ENCODE measurements at regions of chr11 and their contacts with region 1.

Region 1: DNA sequence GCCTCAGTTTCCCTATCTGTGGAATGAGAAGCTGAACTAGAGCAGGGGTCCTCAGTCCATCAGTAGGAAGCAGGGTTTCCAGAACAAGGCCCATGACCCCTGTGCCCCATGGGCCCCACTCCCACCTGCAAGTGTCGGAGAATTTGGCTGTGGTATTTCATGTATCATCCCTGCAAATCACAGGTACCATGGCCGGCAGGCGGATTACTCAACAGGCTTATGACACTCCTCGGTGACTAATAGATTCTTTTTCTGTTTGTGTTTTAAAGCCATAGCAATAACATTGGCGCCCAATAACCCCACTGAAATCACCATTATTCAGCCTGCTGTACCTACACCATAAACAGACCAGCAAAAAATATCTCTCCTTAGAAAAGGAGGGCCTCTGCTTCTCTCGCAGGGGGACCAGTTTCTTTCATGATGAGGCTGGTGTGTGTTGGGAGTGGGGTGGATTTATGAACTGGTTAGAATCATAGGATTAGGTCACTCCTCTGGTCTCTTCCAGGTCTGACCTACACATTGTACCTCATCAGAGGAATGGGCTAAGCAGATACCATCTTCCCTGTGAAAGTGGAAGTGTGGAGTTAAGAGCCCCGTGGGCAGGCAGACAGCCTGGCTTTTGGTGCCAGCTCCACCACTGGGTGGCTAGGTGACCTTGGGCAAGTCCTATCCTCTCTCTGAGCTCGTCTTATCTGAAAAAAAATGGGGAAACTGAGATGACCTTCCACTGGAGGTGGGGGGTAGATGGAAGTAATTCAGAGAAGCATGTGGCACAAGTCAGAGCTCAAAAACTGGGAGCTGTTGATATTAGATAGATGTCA is 60.2 kb upstream of the WNT11 start:
- DNase-seq: peak in 1 of 2 experiments; percentile 49
- H3K4me3 ChIP-seq: no peak overlapping the region
- H3K4me3 Mint-ChIP-seq: no peak overlapping the region
- H3K27ac Mint-ChIP-seq: peak overlapping the region; percentile 11
- H3K4me1 ChIP-seq: peaks cover 10% of the 10 kb centered on the region
- H3K4me1 Mint-ChIP-seq: no peaks in the 10 kb centered on the region
- H3K27me3 ChIP-seq: no peaks in the 10 kb centered on the region
- H3K27me3 Mint-ChIP-seq: no peaks in the 10 kb centered on the region
- CTCF ChIP-seq: no peak

Region 2: DNA sequence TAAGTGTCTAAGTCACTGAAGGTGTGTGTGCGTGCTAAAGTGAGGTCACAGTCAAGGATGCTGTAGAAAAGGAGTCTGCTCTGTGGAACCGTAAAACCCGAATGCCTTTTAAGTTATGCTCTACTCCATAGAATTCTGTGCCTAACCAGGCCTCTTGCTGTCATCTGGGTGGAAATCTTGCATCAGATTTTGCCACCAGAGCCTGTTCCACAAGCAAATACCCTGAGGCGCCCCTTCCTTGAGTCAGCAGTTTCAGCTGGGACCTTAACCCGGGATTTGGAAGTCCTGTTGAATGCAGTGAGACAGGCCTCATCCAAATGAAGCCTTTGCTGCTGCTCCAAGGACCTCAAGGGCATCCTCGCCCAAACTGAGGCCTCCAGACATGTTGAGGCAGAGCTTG is 169.9 kb before region 1 on chr11:
- CTCF ChIA-PET with region 1: no interaction called
- POLR2A ChIA-PET with region 1: no interaction called
- intact Hi-C with region 1: no loop called
- DNase-seq: peak; percentile 70 to 71
- H3K4me3 ChIP-seq: no peak overlapping the region
- H3K4me3 Mint-ChIP-seq: no peak overlapping the region
- H3K27ac Mint-ChIP-seq: peak overlapping the region; percentile 31
- H3K4me1 ChIP-seq: peaks cover 11% of the 10 kb centered on the region
- H3K4me1 Mint-ChIP-seq: peaks cover 16% of the 10 kb centered on the region
- H3K27me3 ChIP-seq: no peaks in the 10 kb centered on the region
- H3K27me3 Mint-ChIP-seq: no peaks in the 10 kb centered on the region
- CTCF ChIP-seq: no peak

Region 3: DNA sequence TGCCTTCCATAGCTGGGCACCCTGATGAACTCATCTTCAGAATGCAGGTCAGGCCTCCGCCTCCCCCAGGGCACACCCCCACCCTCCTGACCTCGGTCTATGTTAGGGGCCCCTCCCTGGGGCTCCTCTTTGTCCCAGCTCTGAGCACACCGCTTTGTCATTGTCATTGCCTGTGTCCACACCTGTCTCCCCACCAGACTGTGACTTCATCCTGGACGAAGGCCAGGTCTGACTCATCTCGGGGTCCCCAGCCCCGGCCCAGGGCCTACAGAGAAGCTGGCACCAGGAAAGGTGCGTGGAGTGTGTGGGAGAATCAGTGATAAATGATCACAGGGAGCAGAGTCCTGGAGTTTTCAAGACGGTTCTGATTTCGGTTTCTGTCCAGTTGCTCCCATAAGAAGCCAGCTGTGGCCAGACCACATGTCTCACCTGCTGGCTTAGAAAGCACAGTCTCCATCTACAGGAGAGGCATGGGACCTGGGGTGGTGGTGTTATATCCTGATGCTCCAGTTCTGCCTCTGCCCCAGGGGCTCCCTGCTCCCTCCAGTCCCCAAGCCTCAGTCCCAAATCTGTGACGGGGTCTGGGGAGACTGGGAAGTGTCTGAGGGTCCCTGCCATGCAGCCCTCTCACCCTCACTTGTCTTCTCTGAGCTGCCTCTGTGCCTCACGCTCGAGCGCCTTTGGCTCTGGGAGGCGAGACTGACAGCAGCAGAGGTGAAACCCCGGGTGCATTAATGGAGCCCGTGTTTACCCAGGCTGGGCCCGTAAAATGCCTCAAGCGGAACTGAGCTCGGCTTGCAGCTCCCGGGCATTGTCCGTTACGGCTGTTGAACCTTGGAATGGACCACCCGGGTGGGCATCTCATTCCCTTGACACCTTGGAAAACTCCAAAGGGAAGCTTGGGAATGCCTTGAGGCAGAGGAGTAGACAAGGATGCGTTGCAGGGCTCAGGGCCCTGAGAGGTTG is 25.4 kb after region 1 on chr11:
- CTCF ChIA-PET with region 1: interaction called, 4 read pairs
- POLR2A ChIA-PET with region 1: no interaction called
- intact Hi-C with region 1: loop called (anchors 1 kb)
- DNase-seq: peak in 1 of 2 experiments; percentile 30
- H3K4me3 ChIP-seq: no peak overlapping the region
- H3K4me3 Mint-ChIP-seq: no peak overlapping the region
- H3K27ac Mint-ChIP-seq: no peak overlapping the region
- H3K4me1 ChIP-seq: peaks cover 4% of the 10 kb centered on the region; the same call in 1 of the 2 replicates
- H3K4me1 Mint-ChIP-seq: peaks cover 19% of the 10 kb centered on the region
- H3K27me3 ChIP-seq: no peaks in the 10 kb centered on the region
- H3K27me3 Mint-ChIP-seq: no peaks in the 10 kb centered on the region
- CTCF ChIP-seq: peak in 1 of 2 experiments; percentile 5